Activated CD4-positive, alpha-beta memory T cell treated with anti-CD3 and anti-CD28 coated beads for 36 hours (primary cell): ENCODE measurements at regions of chr18 and their contacts with region 1.

Region 1: GRCh38 chr18:77101410-77102258 is 30.9 kb downstream of the MBP start:
- DNase-seq: peak; percentile 82
- H3K4me3 Mint-ChIP-seq: peak overlapping the region; percentile 72
- H3K27ac Mint-ChIP-seq: peak overlapping the region; percentile 100
- H3K4me1 Mint-ChIP-seq: peaks cover 94% of the 10 kb centered on the region
- H3K27me3 Mint-ChIP-seq: no peaks in the 10 kb centered on the region

Region 2: DNA sequence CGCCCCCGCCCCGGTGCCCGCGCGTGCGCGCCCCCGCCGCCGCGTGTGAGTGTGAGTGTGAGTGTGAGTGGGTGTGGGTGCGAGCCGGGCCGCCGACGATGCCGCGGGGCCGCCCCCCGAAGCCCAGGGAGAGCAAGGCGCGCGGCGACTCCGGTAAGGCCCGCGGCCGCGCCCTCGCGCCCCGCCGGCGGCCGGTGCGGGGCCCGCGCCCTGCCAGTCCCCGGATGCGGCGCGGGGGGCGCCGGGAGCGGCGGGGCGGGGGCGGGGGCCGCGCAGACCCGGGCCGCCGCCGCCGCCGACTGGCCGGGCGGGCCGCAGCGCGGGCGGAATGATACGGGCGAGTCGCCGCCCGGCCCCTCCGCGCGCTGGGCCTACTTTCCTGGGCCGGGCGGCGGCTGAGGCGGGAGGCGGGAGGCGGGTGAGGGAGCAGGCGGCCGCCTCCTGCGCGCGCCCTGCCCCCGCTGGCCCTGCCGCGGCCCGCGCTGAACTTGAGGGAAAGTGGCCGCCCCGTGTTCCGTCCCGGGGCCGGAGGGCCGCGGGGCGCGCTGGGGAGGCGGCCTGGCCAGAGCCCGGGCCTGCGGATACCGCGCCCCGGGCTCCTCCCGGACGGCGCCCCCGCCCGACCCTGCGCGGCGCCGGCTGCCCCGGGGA is 279.0 kb before region 1 on chr18 and contains the start of gene ZNF236:
- CTCF ChIA-PET with region 1: no interaction called
- POLR2A ChIA-PET with region 1: no interaction called
- intact Hi-C with region 1: loop called (anchors 10 kb)
- DNase-seq: peak; percentile 72
- H3K4me3 Mint-ChIP-seq: peak within 1 kb of the TSS; percentile 89
- H3K27ac Mint-ChIP-seq: peak within 1 kb of the TSS; percentile 87
- H3K4me1 Mint-ChIP-seq: peaks cover 51% of the 10 kb centered on the region
- H3K27me3 Mint-ChIP-seq: no peaks in the 10 kb centered on the region
- total RNA-seq, gene ZNF236: 14.4 to 15.6 TPM

Region 3: DNA sequence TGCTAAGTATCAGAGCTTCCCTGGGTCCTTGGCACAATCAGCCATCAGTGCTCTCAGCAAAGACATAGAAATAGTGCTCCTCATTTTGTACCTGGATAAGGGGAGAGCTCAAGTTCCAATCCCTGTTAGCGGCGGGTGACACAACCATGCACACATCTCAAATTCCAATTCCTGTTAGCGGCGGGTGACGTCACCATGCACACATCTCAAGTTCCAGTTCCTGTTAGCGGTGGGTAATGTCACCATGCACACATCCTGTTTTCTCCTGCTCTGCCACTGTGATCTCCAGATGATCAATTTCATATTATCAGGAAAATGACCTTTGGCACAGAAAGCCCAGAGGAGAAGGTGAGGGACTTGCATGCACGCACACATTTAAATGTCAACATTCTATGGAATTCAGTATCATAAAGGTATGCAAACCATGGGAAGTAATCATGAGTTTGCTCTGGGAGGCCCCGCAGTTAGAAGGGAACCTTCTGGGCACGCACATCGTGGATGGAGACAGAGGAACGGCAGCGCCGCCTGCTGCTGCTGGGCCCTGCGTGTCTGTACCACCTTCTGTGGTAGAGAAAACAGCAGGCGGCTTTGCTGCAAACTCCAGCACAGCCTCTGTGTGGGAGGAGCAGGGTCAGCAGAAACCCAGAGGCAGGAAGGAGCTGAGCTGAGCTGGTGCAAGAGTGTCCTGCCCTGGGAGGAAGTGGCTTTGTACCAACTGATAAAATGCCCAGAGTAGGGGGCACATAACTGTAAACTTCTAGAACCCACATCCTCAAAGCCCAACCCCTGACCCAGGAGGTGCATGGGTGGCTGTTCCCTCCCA is 46.8 kb before region 1 on chr18:
- CTCF ChIA-PET with region 1: interaction called, 11 read pairs
- POLR2A ChIA-PET with region 1: interaction called, 4 read pairs
- intact Hi-C with region 1: no loop called
- DNase-seq: peak; percentile 90
- H3K4me3 Mint-ChIP-seq: peak overlapping the region; percentile 81
- H3K27ac Mint-ChIP-seq: peak overlapping the region; percentile 96
- H3K4me1 Mint-ChIP-seq: peaks cover 72% of the 10 kb centered on the region
- H3K27me3 Mint-ChIP-seq: no peaks in the 10 kb centered on the region

Region 4: DNA sequence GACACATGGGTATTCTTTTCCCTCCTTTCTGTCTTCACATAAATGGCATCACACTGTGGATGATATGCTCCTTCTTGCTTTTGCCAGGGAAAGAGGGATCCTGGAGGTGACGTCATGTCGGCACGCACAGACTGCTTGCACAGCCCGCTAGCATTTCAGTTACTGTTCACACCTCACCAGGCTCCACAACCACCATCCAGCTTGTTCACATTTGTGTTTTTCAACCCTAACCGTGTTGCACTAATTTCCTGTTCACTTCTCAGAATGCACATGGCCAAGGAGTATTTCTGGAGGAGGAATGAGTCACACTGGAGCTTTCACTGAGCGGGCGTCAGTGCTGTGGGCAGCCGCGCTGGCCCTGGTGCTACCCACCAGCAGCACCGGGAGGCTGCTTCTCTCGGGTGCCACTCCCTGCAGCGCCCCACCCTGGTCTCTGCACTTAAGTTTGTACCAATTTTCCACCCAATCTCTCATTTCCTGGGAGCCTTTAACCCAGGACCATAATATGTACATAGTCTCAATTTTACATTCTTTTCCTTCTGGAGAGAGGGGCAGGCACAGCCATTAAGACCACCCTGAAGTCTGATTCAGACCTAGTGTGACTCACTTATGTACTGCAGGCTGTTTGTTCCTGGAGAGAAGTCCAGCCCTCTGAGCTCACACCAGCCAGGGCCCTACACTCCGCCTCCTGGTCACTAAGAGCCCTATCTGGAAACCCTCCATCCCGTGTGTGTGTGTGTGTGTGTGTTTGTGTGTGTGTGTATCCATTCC is 34.2 kb before region 1 on chr18:
- CTCF ChIA-PET with region 1: interaction called, 23 read pairs
- POLR2A ChIA-PET with region 1: interaction called, 68 read pairs
- intact Hi-C with region 1: loop called (anchors 1 kb)
- DNase-seq: peak; percentile 83
- H3K4me3 Mint-ChIP-seq: peak overlapping the region; percentile 54
- H3K27ac Mint-ChIP-seq: peak overlapping the region; percentile 91
- H3K4me1 Mint-ChIP-seq: peaks cover 100% of the 10 kb centered on the region
- H3K27me3 Mint-ChIP-seq: no peaks in the 10 kb centered on the region

Region 5: GRCh38 chr18:77124452-77124922 is 22.9 kb after region 1 on chr18:
- CTCF ChIA-PET with region 1: interaction called, 36 read pairs
- POLR2A ChIA-PET with region 1: interaction called, 20 read pairs
- intact Hi-C with region 1: loop called (anchors 1 kb)
- DNase-seq: peak; percentile 80
- H3K4me3 Mint-ChIP-seq: peak overlapping the region; percentile 75
- H3K27ac Mint-ChIP-seq: peak overlapping the region; percentile 93
- H3K4me1 Mint-ChIP-seq: peaks cover 93% of the 10 kb centered on the region
- H3K27me3 Mint-ChIP-seq: no peaks in the 10 kb centered on the region

Region 6: GRCh38 chr18:77140439-77141109 is 38.9 kb after region 1 on chr18:
- CTCF ChIA-PET with region 1: interaction called, 3 read pairs
- POLR2A ChIA-PET with region 1: no interaction called
- intact Hi-C with region 1: loop called (anchors 5 kb)
- DNase-seq: peak; percentile 75
- H3K4me3 Mint-ChIP-seq: no peak overlapping the region
- H3K27ac Mint-ChIP-seq: peak overlapping the region; percentile 54
- H3K4me1 Mint-ChIP-seq: peaks cover 36% of the 10 kb centered on the region
- H3K27me3 Mint-ChIP-seq: no peaks in the 10 kb centered on the region

Region 7: GRCh38 chr18:77223653-77224052 is 122.0 kb after region 1 on chr18:
- CTCF ChIA-PET with region 1: no interaction called
- POLR2A ChIA-PET with region 1: no interaction called
- intact Hi-C with region 1: loop called (anchors 1 kb)
- DNase-seq: no peak
- H3K4me3 Mint-ChIP-seq: no peak overlapping the region
- H3K27ac Mint-ChIP-seq: no peak overlapping the region
- H3K4me1 Mint-ChIP-seq: peaks cover 11% of the 10 kb centered on the region
- H3K27me3 Mint-ChIP-seq: peaks cover 4% of the 10 kb centered on the region

Region 8: DNA sequence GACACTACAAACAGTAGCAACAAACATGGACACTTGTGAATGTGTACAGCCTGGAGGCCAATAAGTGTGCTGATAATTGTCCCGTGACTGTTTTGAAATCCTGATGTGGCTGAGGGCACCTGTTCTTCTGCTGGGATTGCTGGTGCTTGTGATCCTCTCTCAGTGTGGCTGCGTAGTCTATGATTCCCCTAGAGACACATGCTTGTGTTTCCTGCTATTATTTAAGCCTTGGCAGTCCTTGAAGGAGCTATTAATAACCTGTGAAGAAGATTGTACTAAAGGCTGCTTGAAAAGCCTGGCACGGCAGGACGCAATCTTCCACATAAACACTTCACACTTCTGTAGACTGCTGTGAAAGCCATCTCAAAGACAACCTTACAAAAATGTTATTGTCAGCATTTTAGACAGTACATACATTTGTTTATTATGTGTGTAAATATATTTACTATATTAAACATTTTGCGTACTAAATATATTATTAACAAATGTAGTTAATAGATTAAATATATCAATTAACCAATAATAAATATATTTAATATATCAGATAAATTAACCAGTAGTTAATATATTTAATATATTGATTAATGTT is 219.4 kb after region 1 on chr18:
- CTCF ChIA-PET with region 1: no interaction called
- POLR2A ChIA-PET with region 1: no interaction called
- intact Hi-C with region 1: no loop called
- DNase-seq: no peak
- H3K4me3 Mint-ChIP-seq: no peak overlapping the region
- H3K27ac Mint-ChIP-seq: no peak overlapping the region
- H3K4me1 Mint-ChIP-seq: no peaks in the 10 kb centered on the region
- H3K27me3 Mint-ChIP-seq: peaks cover 25% of the 10 kb centered on the region